ENCODE measurements at regions of chr2 and their contacts with region 1.

Region 1: DNA sequence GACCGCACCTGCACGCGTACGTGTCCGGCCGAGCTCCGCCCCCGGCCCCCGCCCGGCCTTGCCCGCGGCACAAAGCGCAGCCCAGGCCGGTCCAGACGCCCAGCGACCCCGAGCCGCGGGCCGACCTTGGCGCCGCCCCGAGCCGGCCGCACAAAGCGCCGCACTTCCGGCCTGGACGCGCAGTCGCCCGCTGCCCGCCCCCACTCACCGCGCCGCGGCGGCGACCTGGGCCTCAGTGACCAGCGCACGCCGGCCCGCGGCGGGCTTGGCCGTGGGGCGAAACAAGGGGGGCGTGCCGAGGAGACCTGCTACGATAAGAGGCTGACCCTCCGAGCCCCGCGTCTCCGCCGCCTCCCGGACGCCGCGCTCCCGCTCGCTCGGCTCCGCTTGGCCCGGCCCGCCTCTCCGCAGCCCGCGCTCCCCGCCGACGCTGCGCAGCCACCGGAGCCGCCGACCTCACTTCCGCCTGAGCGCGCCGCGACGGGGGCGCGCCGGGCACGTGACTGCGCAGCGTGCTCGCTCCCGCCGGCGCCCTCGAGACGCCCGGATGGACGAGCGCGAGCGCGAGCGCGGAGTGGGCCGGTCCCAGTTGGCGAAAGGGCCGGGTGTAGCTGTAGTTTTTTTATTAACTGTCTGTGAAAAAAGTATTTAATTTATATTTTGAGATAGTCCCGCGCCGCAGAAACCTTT is at the start of gene FAM168B:
- DNase-seq: peak; percentile 82
- H3K27ac ChIP-seq: peak within 1 kb of the TSS; percentile 88
- CTCF ChIP-seq: no peak

Region 2: DNA sequence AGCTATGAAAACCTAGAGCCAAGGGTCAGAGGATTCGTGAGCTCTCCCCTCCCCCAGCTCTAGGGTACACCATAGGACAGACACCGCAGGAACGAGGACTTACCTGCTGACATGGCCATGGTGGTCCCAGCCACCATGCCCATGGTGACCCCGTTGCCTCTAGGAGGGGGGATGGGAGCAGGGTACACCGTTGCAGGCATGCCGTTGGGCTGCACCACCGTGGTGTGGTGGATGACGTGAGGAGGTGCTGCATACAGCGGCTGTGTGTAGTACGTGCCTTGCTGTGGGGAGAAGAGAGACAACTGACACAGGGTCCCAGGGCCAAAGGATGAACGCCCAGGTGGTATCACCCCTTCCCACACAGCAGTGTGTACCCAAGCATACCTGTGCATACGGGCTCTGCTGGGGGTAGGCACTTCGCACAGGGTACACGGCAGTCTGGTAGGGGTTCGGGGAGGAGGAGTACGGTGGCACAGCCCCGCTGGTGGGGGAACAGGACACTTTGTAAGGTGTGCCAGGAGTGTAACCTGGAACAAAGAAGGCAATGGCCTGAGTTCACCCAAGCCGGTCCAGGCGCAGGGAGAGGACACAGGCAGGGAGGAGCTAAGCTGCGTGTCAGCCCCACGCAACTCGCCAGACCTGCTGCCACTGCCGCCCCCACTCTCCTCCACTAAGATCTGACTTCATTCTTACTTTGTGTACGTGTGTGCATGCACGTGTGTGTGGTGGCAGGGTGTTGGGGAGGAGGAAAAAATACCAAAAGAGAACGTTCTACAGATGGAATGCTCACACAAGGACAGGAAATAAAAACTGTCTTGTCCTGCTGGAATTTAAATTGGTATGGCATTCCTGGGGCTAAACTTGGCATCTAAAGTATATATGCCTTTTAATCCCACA is 37.7 kb before region 1 on chr2:
- CTCF ChIA-PET with region 1: no interaction called
- POLR2A ChIA-PET with region 1: no interaction called
- DNase-seq: no peak
- H3K27ac ChIP-seq: no peak overlapping the region
- CTCF ChIP-seq: no peak

Region 3: DNA sequence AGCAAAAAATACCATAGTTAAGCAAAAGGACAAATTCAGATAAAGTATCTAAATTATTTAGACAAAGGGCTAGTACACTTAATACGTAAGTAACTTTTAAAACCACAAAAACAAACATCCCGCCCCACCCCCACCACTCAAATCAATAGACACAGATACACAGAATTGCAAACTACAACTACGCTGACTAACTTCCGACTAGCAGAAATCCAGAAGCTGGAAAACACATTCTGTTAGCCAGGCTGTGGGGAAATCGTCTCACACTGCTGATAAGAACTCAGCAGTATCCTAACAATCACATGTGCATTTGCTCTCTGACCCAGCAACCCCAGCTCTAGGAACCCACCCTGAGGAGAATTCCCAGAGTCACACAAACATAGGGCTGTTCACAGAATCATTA is 16.4 kb before region 1 on chr2:
- CTCF ChIA-PET with region 1: no interaction called
- POLR2A ChIA-PET with region 1: interaction called, 10 read pairs
- DNase-seq: no peak
- H3K27ac ChIP-seq: no peak overlapping the region
- CTCF ChIP-seq: no peak